ENCODE measurements at regions of chr15 and their contacts with region 1.

Region 1: GRCh38 chr15:41230650-41231533 is at the starts of genes CHP1 and EXD1:
- DNase-seq: peak; percentile 97
- ATAC-seq: peak; percentile 99
- H3K4me3 ChIP-seq: peak within 1 kb of the TSS; percentile 92
- H3K27ac ChIP-seq: peak within 1 kb of the TSS; percentile 50
- H3K4me1 ChIP-seq: peaks cover 18% of the 10 kb centered on the region
- H3K27me3 ChIP-seq: no peaks in the 10 kb centered on the region
- CTCF ChIP-seq: peak; percentile 90
- total RNA-seq, gene CHP1: 62.2 and 107 TPM in 2 replicates
- total RNA-seq, gene EXD1: not detected in 2 replicates

Region 2: DNA sequence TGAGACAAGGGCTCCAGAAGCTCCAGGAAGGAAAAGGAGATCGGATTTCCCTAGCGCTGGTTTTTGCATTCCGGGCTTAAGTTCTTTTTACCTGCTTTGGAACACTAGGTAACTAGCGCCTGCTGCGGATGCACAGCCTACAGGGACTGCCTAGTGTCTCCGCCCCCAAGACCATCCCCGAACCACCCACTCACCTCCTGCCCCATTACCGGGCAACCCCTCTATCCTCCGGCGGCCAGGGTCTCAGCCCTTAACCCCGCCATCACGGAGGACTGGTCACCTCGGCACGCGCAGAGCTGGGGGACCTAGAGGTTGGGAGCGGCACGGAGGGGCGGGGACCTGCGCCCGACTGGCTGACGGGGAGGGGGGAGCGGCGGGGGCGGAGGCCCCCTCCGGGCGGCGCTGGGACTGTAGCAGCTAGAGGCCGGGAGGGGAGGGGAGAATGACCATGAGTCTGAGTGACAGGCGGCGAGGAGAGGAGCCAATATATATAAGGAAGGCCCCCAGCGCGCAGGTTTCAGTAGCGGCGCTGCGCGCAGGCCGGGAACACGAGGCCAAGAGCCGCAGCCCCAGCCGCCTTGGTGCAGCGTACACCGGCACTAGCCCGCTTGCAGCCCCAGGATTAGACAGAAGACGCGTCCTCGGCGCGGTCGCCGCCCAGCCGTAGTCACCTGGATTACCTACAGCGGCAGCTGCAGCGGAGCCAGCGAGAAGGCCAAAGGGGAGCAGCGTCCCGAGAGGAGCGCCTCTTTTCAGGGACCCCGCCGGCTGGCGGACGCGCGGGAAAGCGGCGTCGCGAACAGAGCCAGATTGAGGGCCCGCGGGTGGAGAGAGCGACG is 301.9 kb before region 1 on chr15 and contains the start of gene DLL4:
- CTCF ChIA-PET with region 1: no interaction called
- POLR2A ChIA-PET with region 1: interaction called, 11 read pairs
- intact Hi-C with region 1: no loop called
- DNase-seq: peak; percentile 77
- ATAC-seq: peak; percentile 49
- H3K4me3 ChIP-seq: peak within 1 kb of the TSS; percentile 76
- H3K27ac ChIP-seq: no peak within 1 kb of the TSS
- H3K4me1 ChIP-seq: peaks cover 45% of the 10 kb centered on the region
- H3K27me3 ChIP-seq: peaks cover 25% of the 10 kb centered on the region
- CTCF ChIP-seq: no peak
- total RNA-seq, gene DLL4: 2.2 and 2.9 TPM in 2 replicates

Region 3: GRCh38 chr15:41085029-41085428 is 145.9 kb before region 1 on chr15:
- CTCF ChIA-PET with region 1: no interaction called
- POLR2A ChIA-PET with region 1: no interaction called
- intact Hi-C with region 1: no loop called
- DNase-seq: no peak
- ATAC-seq: no peak
- H3K4me3 ChIP-seq: no peak overlapping the region
- H3K27ac ChIP-seq: no peak overlapping the region
- H3K4me1 ChIP-seq: no peaks in the 10 kb centered on the region
- H3K27me3 ChIP-seq: no peaks in the 10 kb centered on the region
- CTCF ChIP-seq: no peak

Region 4: DNA sequence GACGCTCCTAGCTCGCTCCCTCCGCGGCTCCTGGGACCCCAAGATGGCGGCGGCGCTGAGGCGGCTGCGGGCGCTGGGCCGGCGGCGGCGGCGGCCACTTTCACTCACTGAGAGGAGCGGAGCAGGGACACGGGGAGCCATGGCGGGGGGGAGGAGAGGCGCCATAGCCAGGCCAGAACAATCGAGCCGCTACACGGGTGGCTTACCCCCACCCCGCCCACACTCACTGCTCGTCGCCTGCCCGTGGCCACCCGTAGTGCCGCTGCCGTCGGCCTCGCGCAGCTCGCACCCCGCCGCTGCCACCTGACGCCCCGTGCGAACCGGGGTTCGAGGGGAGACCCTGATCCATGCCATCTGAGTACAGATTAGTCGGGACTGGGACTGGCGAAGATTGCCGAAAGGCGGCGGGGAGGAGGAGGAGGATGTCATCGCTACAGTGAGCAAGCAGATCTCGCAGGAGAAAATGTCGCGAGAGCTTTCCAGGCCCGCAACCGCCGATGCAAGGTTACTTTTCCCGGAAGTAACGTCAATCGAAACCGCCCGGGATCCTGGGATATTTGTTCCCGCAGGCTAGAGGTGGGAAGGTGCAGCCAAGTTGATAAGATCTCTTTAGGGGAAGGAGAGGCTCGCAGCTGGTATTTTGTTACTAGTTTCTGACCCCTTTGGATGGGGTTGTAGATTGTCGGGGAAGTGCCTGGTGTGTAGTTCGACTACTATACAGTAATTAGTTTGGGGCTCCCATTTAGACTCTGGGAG is 114.6 kb before region 1 on chr15 and contains the start of gene INO80:
- CTCF ChIA-PET with region 1: no interaction called
- POLR2A ChIA-PET with region 1: interaction called, 5 read pairs
- intact Hi-C with region 1: loop called (anchors 1 kb)
- DNase-seq: peak; percentile 99
- ATAC-seq: peak; percentile 88
- H3K4me3 ChIP-seq: peak within 1 kb of the TSS; percentile 89
- H3K27ac ChIP-seq: peak within 1 kb of the TSS; percentile 93
- H3K4me1 ChIP-seq: peaks cover 11% of the 10 kb centered on the region
- H3K27me3 ChIP-seq: no peaks in the 10 kb centered on the region
- CTCF ChIP-seq: no peak
- total RNA-seq, gene INO80: 38.4 and 47.7 TPM in 2 replicates

Region 5: GRCh38 chr15:41258706-41259471 is 28.0 kb after region 1 on chr15:
- CTCF ChIA-PET with region 1: no interaction called
- POLR2A ChIA-PET with region 1: no interaction called
- intact Hi-C with region 1: loop called (anchors 2 kb)
- DNase-seq: peak; percentile 91
- ATAC-seq: peak; percentile 97
- H3K4me3 ChIP-seq: peak overlapping the region; percentile 32
- H3K27ac ChIP-seq: peak overlapping the region; percentile 77
- H3K4me1 ChIP-seq: peaks cover 37% of the 10 kb centered on the region
- H3K27me3 ChIP-seq: no peaks in the 10 kb centered on the region
- CTCF ChIP-seq: no peak

Region 6: GRCh38 chr15:41283653-41284426 is 52.9 kb after region 1 on chr15:
- CTCF ChIA-PET with region 1: no interaction called
- POLR2A ChIA-PET with region 1: no interaction called
- intact Hi-C with region 1: loop called (anchors 1 kb)
- DNase-seq: peak; percentile 99
- ATAC-seq: peak; percentile 94
- H3K4me3 ChIP-seq: peak overlapping the region; percentile 91
- H3K27ac ChIP-seq: peak overlapping the region; percentile 47
- H3K4me1 ChIP-seq: peaks cover 37% of the 10 kb centered on the region
- H3K27me3 ChIP-seq: no peaks in the 10 kb centered on the region
- CTCF ChIP-seq: no peak

Region 7: DNA sequence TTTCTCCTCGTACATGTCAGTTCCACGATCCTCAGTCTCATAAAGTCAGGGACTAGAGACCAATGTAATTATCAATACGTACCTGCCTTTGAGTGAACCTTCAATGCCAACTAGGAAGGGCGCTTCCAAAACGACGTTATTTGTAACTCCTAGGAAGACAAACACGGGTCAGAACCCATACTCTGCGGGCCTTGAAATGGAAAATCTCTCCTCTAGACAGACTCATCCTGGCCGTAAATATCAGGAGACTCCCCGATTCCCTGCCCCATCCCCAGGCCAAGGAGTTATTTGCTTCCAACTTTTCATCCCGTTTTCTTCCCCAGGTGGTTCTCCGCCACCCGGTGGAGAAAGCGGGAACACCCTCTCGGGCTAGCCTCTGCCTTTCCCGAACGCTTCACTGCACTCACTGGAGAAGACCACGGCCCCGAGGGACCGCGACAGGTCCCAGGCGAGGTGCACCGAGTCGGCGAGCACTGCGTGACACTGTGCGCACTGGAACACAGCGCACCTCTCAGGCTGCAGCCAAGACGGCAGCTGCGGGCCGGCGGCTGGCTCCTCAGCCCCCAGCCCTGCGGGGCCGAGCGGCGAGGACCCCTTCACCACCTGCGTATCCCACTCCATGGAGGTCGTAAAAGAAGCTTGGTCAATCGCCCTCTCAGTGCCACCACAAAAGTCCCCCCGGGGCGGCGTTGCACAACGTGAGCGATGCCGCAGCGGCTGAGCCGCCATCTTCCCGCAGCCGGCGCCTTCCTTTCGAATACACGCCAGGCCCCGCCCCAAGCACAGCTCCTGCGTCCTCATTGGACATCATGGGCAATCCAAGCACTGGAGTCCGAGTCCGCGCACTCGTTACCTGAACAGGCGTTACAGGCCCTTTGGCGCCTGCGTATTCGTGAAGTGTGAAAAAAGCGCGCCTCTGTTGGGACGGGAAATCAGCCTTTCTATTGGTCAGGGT is 101.2 kb after region 1 on chr15 and contains the start of gene OIP5:
- CTCF ChIA-PET with region 1: interaction called, 4 read pairs
- POLR2A ChIA-PET with region 1: no interaction called
- intact Hi-C with region 1: loop called (anchors 1 kb)
- DNase-seq: peak; percentile 100
- ATAC-seq: peak; percentile 94
- H3K4me3 ChIP-seq: peak within 1 kb of the TSS; percentile 87
- H3K27ac ChIP-seq: peak within 1 kb of the TSS; percentile 57
- H3K4me1 ChIP-seq: peaks cover 11% of the 10 kb centered on the region; the same call in 1 of the 2 replicates
- H3K27me3 ChIP-seq: no peaks in the 10 kb centered on the region
- CTCF ChIP-seq: peak; percentile 71
- total RNA-seq, gene OIP5: 26.6 and 40.3 TPM in 2 replicates

Region 8: GRCh38 chr15:41443275-41443674 is 212.4 kb after region 1 on chr15:
- CTCF ChIA-PET with region 1: no interaction called
- POLR2A ChIA-PET with region 1: no interaction called
- intact Hi-C with region 1: no loop called
- DNase-seq: no peak
- ATAC-seq: no peak
- H3K4me3 ChIP-seq: no peak overlapping the region
- H3K27ac ChIP-seq: no peak overlapping the region
- H3K4me1 ChIP-seq: no peaks in the 10 kb centered on the region
- H3K27me3 ChIP-seq: no peaks in the 10 kb centered on the region
- CTCF ChIP-seq: no peak